Lower lobe of right lung (tissue), 2 donors: ENCODE measurements at regions of chr2 and their contacts with region 1.

Region 1: DNA sequence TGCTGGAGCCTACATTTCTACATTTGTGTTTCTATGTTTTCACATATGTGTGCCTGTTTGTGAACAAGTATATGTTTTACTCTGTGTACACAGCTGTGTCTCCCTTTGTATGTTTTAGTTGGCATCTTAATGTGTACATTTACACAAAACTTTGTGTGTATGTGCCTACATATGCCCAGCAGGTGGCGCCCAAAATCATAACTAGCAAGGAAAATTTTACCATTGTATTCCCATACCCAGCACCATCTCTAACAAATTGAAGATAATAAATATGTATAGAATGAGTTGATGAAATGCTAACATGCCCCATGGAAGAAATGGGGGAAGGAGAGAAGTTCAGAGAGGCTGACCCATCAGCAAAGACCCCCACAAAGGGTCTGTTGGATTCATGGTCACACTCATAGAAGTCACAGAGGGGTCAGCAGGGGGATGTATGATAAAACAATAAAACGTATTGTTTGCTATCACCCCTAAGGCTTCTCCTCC is 48.1 kb downstream of the PKDCC start:
- DNase-seq: peak; percentile 82
- ATAC-seq: peak; percentile 34 to 64
- H3K4me3 ChIP-seq: no peak overlapping the region
- H3K27ac ChIP-seq: no peak overlapping the region
- H3K4me1 ChIP-seq: peaks cover 55% of the 10 kb centered on the region
- H3K27me3 ChIP-seq: no peaks in the 10 kb centered on the region
- CTCF ChIP-seq: peak; percentile 77

Region 2: DNA sequence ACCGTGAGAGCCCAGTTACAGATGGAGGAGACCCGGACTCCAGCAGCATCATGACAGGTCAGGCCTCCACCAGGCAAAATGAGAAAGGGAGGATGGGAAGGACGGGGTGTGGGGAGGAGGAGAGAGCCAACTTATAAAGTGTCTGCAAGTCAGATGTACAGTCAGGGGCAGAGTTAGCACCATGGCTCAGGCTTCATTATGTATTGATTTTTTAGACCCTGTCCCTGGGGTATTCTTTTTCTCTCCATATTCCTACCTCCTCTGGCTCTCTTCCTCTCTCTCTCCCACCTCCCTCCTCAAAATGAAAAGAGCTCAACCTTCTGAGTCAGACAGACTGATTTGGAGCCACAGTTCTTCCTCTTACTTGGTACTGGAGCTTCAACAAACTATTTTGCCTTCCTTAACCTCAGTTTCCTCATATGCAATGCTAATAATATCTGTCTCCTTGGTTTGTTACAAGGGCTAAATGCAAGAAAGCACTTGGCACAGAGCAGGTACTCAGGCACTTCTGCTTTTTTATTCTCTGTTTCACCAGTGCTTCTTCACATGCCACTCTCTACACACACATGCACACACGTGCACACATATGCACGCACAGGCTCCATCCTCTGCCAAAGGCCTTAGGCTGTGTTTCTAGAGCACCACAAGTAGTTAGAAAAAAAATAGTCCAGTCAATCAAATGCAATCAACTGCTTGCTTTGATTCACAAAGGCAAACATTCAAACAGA is 140.5 kb before region 1 on chr2:
- intact Hi-C with region 1: no loop called
- DNase-seq: no peak
- ATAC-seq: no peak
- H3K4me3 ChIP-seq: no peak overlapping the region
- H3K27ac ChIP-seq: no peak overlapping the region
- H3K4me1 ChIP-seq: no peaks in the 10 kb centered on the region
- H3K27me3 ChIP-seq: no peaks in the 10 kb centered on the region
- CTCF ChIP-seq: no peak

Region 3: GRCh38 chr2:41966431-41966893 is 129.5 kb before region 1 on chr2:
- intact Hi-C with region 1: no loop called
- DNase-seq: peak; percentile 61
- ATAC-seq: peak; percentile 61 to 67
- H3K4me3 ChIP-seq: no peak overlapping the region
- H3K27ac ChIP-seq: peak overlapping the region; percentile 58
- H3K4me1 ChIP-seq: peaks cover 35% of the 10 kb centered on the region
- H3K27me3 ChIP-seq: no peaks in the 10 kb centered on the region
- CTCF ChIP-seq: no peak

Region 4: DNA sequence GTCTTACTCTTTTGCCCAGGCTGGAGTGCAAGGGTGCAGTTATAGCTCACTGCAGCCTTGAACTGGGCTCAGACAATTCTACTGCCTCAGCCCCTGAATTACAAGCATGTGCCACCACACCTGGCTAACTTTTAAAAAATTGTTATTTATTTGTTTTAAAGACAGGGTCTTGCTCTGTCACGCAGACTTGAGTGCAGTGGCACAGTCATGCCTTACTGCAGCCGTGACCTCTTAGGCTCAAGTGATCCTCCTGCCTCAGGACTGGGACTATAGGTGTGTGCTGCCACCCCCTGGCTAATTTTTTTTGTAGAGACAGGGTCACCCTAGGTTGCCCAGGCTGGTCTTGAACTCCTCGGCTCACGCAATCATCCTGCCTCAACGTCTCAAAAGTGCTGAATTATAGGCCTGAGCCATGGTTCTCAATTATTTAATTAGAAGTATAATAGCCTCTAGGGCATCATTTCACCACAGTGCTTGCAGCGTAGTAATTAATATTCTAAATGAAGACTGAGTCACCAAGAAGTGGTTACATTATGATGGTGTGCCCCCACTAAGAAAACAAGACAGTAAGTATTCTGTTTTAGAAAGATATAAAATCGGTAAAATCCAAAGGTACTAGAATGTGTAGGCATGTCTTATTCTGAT is 142.8 kb after region 1 on chr2:
- intact Hi-C with region 1: loop called (anchors 5 kb)
- DNase-seq: peak; percentile 58
- ATAC-seq: peak; percentile 94
- H3K4me3 ChIP-seq: no peak overlapping the region
- H3K27ac ChIP-seq: no peak overlapping the region
- H3K4me1 ChIP-seq: peaks cover 48% of the 10 kb centered on the region
- H3K27me3 ChIP-seq: no peaks in the 10 kb centered on the region
- CTCF ChIP-seq: peak; percentile 55

Region 5: DNA sequence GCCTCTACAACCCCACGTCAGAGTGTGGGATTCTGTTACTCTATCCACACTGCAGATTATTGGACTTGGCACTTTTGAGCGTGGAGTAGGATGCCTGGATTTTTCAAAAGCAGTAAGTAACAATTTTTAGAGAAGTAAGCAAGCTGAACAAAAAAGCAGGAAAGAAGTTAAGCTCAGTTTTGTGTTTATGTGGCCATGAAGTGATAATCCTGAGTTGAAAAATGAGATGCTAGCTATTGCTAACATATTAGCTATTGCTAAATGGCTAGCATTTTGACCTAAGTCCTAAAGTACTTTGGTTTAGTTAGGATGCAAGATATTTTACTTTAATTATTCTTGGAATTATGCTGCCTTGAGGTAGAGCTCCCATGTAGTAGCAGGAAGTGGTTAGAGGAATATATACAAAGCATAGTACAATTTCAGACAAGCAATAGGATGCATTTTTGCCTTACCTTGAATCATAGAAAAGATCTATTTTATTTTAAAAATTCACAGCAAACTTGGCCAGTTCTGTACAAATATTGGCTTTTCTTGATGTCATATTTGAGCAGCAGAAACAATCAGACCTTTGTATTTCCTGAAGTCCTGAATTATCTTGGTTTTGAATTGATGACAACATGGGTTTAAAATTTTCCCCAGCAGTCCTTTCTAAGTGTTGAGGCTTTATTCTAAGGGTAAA is 190.4 kb after region 1 on chr2:
- intact Hi-C with region 1: no loop called
- DNase-seq: no peak
- ATAC-seq: no peak
- H3K4me3 ChIP-seq: no peak overlapping the region
- H3K27ac ChIP-seq: no peak overlapping the region
- H3K4me1 ChIP-seq: no peaks in the 10 kb centered on the region
- H3K27me3 ChIP-seq: no peaks in the 10 kb centered on the region
- CTCF ChIP-seq: no peak